PC-9 (cell line): ENCODE measurements at regions of chr2 and their contacts with region 1.

Region 1: DNA sequence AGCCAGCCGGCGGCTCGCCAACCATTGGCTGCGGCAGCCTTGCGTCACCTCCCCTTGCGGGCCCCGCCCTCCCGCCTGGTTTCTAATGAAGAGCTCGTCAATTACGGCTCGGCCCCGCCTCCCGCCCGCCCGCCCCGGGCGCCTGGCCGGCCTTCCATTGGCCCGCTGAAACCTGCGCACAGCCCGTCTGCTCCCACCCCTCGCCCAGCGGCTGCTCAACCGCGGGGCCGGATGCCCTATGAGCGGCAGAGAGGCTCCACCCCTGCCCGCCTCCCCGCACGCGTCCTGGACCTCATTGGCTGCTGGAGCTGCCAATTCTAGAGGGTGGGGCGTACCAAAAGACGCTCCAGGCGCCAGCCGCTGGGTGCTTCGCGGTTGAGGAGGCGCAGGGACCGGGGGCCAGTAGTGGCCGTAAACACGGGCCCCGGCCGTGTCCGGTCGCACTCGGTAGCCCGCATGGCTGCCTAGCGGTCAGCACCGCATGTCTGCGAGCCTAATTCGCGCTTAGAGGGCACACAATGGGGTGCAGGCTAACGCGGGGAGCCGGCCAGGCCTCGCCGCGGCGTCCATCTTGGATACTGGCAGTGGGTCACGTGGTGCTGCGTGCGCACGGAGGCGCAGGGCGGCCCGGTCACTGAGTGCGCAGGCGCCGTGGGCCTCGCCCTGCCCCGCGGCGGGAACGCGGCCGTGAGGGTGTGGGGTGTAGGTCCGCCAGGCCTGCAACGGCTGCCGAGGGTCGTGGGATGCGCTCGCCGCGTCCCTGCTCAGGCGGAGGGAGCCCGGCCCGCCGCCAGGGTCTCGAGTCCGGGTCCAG is 454 bp upstream of the HDAC4 start:
- DNase-seq: peak; percentile 96 to 100
- H3K4me3 ChIP-seq: peak overlapping the region; percentile 99
- H3K27ac ChIP-seq: peak overlapping the region; percentile 94
- H3K4me1 ChIP-seq: peaks cover 16% of the 10 kb centered on the region
- H3K27me3 ChIP-seq: peaks cover 10% of the 10 kb centered on the region
- CTCF ChIP-seq: no peak

Region 2: DNA sequence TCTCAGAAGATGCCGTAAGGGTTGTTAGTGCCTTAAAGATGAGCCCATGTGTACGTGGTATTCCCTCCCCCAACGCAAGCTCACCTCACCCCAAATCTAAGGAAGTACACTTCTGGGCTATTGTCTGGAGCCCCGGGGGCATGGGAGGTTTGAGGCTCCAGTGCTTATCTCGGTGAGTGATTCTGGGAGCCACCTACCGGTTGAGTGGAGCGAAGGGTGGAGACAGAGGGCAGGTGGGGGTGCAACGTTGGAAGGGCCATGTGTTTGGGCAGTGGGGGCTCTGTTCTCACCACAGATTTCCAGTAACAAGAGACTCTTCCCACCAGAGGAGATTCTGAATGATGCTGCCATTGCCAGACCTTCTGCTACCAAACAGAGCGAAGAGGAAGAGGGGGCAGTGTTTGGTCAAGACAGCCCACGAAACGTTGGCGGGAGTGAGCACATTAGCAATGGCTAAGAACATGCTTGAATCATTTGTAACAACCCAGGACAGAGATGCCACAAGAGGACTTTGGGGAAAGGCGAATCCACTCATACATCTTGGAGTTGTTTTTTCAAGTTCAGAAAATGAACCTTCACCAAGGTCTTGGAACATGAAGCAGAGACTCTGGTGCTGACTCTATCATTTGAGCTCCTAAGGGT is 514.7 kb before region 1 on chr2:
- CTCF ChIA-PET with region 1: no interaction called
- POLR2A ChIA-PET with region 1: interaction called, 14 read pairs
- intact Hi-C with region 1: no loop called
- DNase-seq: no peak
- H3K4me3 ChIP-seq: no peak overlapping the region
- H3K27ac ChIP-seq: no peak overlapping the region
- H3K4me1 ChIP-seq: no peaks in the 10 kb centered on the region
- H3K27me3 ChIP-seq: peaks cover 58% of the 10 kb centered on the region
- CTCF ChIP-seq: no peak; the same call in 1 of the 2 replicates

Region 3: DNA sequence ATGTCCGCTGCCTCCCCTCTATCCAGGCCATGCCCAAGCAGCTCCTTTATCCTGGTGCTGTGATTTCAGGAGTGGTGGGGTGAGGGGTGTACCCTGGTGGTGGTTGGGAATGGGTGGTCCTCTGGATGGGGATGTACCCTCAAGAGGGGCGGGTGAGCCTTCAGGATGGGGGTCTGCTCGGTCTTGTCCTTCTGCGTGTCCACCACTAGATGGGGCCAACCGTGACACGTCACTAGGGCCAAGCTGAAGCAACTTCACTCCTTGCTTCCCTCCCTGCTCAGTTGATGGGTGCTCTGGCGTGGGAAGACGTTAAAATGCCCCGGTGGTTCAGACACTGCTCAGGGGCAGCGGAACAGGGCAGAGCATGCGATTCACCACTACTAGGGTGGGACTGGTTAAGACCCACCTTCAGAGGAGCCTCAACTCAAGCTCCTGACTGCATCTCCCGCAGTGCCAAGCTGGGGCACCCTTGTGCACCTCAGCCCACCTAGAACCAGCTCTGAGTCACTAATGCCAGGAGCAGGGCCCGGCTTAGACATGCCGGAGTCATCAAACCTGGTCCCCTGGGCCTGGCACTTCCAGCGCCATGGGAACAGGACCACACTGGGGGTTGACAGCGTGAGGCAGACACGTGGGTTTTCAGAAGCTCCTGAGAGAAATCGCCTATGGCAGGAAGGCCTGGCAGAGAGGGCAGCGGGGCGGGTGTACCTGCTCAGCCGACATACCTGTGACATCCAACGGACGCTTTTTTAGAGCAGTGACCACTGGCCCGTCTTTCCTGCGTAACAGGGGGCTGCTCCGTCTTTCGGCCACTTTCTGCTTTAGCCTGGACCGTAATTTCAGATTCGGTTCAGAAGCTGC is 257.2 kb before region 1 on chr2:
- CTCF ChIA-PET with region 1: no interaction called
- POLR2A ChIA-PET with region 1: interaction called, 4 read pairs
- intact Hi-C with region 1: loop called (anchors 5 kb)
- DNase-seq: no peak
- H3K4me3 ChIP-seq: no peak overlapping the region
- H3K27ac ChIP-seq: no peak overlapping the region
- H3K4me1 ChIP-seq: no peaks in the 10 kb centered on the region
- H3K27me3 ChIP-seq: no peaks in the 10 kb centered on the region
- CTCF ChIP-seq: peak; percentile 77

Region 4: DNA sequence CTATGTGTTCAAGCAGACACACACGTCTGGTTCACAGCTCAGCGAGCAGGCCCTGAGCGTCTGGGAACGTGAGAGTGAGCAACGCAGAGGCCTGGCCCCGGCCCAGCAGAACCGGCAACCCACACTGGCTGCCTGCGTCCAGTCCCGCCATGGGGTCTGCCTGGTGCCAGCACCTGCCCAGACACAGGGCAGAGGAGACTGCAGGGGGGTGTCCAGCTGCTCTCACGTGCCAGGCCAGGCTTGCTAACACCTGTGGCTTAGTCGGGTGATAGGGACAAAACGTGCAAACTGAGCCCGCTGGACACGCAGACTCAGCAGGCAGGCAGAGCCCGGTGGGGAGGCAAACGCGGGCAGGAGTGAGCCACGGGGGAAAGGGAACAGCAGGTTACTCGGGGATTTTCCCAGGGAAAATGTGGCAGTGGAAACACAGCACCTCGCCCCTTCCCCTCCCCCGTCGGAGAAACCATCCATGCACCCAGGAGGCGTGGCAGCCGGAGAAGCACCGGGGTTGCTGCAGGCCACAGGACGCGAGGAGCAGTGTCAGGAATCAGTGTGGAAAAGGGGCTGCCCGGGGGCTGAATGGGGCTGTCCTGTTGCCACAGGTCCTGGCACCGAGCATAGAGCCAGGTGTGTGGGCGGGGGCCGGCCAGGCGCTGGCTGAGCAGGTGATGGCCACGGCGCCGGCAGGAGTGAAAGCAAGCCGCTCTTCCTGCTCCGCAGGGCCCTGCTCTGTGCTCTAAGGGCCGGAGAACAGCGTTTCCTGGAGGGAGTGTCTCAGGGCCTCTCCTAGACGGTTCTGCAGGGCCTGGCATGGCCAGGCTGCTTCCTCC is 155.2 kb before region 1 on chr2:
- CTCF ChIA-PET with region 1: no interaction called
- POLR2A ChIA-PET with region 1: interaction called, 10 read pairs
- intact Hi-C with region 1: loop called (anchors 2 kb)
- DNase-seq: peak; percentile 71 to 74
- H3K4me3 ChIP-seq: peak overlapping the region; percentile 47; the same call in 1 of the 2 replicates
- H3K27ac ChIP-seq: peak overlapping the region; percentile 95
- H3K4me1 ChIP-seq: peaks cover 46% of the 10 kb centered on the region
- H3K27me3 ChIP-seq: no peaks in the 10 kb centered on the region
- CTCF ChIP-seq: no peak

Region 5: DNA sequence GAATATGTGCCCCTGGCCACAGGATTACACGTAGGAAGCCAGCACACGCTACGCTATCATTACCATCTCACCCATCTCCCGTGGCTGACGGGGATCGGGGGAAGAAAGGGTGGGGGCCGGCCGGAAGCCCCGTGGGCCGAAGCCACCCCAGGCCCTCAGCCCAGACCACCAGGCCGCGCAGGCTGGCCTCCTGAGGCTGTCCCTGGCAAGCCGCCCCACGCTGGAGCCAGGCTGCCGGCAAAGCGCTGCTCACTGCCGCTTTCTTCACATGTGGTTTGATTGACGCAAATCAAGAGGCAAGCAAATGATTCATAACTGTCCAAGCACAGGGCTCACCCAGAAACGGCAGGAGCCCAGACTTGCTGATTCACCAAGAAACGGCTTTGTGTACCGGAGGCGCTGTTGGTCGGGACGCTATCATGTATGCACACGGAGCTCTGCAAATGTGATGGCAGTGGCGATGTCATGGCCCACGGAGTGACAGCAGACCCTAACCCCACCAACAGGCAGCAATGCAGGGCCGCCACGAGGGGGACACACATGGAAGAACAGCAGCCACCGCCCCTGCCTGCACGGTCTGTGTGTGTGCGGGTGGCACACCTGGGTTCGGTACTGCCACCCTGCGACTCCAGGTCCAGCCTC is 126.1 kb before region 1 on chr2:
- CTCF ChIA-PET with region 1: interaction called, 6 read pairs
- POLR2A ChIA-PET with region 1: no interaction called
- intact Hi-C with region 1: loop called (anchors 2 kb)
- DNase-seq: peak; percentile 87 to 97
- H3K4me3 ChIP-seq: peak overlapping the region; percentile 59
- H3K27ac ChIP-seq: peak overlapping the region; percentile 82
- H3K4me1 ChIP-seq: peaks cover 47% of the 10 kb centered on the region
- H3K27me3 ChIP-seq: no peaks in the 10 kb centered on the region
- CTCF ChIP-seq: no peak